ENCODE measurements at regions of chr18 and their contacts with region 1.

Region 1: DNA sequence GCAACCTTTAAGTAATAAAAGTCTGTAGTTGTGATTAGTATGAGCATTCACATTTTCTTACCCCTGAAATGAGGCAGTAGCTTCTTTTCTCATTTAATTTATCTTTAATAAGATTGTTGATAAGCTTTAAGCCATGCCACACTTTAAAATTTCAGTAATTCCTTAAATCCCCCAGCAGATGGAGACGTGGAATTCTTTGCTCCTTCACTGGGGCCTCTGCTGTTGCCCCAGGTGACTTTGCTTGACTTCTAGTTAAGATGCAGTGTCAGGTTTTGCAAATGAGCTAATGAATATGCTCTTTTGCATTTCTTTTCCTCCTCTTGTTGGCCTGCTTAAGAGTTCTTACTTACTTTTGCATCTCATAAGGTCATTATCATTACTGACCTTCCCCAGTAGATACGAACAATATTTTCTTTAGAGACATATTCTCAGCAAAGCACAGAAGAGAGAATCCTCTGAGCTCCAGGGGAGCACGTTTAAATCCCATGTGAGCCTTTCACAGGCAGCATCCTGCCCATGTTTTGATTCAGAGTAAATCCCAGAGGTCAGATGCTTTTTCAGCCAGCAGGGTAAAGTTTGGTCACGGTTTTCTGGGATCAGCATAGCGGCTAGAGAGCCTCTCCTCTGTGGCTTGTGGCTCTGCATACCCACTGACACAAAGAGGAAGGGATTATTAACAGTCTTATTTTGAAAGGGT is 222.9 kb downstream of the PTPRM start:
- DNase-seq: peak; percentile 59
- H3K4me3 ChIP-seq: no peak overlapping the region
- H3K27ac ChIP-seq: no peak overlapping the region
- H3K4me1 ChIP-seq: no peaks in the 10 kb centered on the region
- H3K27me3 ChIP-seq: no peaks in the 10 kb centered on the region
- CTCF ChIP-seq: peak; percentile 31 to 43
- POLR2A ChIP-seq: no peak

Region 2: DNA sequence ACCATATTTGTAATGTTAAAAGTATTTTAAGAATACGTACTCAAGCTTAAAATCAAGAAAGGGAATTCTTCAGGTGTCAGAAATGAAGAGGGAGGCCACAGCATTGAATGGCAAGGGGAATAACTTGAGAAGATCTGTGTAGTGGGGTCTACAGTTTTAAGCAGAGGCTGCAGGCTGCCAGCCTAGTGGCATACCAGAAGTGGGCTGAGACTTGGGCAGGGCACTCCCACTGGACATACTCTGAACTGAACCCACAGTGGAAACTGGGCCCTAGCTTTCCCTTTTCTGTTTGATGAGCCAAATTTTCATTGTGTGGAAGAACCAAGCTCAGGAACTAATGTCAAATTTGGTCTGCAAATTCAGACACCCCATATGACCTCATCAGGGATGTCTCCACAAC is 15.9 kb after region 1 on chr18:
- CTCF ChIA-PET with region 1: interaction called, 17 read pairs
- POLR2A ChIA-PET with region 1: no interaction called
- dilution Hi-C with region 1: no loop called
- intact Hi-C with region 1: no loop called
- DNase-seq: no peak
- H3K4me3 ChIP-seq: no peak overlapping the region
- H3K27ac ChIP-seq: no peak overlapping the region
- H3K4me1 ChIP-seq: no peaks in the 10 kb centered on the region
- H3K27me3 ChIP-seq: no peaks in the 10 kb centered on the region
- CTCF ChIP-seq: no peak
- POLR2A ChIP-seq: no peak

Region 3: GRCh38 chr18:7980136-7980535 is 190.1 kb after region 1 on chr18:
- CTCF ChIA-PET with region 1: interaction called, 15 read pairs
- POLR2A ChIA-PET with region 1: no interaction called
- dilution Hi-C with region 1: no loop called
- intact Hi-C with region 1: loop called (anchors 10 kb)
- DNase-seq: no peak
- H3K4me3 ChIP-seq: no peak overlapping the region
- H3K27ac ChIP-seq: no peak overlapping the region
- H3K4me1 ChIP-seq: no peaks in the 10 kb centered on the region
- H3K27me3 ChIP-seq: no peaks in the 10 kb centered on the region
- CTCF ChIP-seq: peak in 1 of 2 donors; percentile 3
- POLR2A ChIP-seq: no peak

Region 4: DNA sequence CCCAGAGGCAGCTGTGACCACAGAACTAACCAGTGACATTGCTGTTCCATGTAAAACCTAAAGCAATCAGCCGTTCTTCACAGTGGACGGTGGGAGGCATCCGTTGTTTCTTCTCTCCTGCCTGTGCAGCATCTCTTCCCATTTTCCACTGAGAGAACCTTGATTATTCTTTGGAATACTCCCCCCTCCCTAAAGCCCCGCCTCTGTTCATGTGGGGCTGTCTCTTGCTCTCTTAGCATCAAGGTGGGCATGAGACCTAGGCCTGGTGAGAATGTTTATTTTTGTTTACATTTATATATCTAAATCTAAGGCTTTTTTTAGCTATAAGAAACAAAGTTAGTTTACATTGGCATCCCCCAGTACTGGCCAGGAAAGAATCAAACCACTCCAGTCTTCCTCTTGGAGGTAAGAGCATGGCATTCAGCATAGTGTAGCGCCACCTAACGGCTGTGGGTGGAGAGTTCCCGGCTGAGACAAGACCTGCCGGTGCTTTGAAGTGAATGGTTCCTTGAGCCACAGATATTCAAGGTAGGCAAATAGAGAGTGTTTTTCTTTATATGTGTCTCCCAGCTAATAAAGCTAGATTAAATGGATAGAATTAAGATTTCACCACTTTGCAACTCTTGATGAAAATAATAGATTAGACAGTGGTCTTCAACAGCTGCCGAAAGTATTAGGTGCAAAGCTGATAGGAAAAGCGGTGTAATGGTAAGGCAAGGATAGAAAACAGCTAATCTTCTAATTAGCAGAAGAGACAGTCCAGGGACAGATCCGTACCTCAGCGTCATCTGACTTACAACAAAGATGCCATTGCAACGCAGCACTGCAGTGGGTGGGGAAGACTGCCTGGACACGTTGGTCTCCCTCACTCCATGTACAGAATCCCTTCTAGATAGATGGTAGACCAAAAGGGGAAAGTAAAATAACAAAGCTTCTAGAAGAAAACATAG is 599.7 kb after region 1 on chr18:
- CTCF ChIA-PET with region 1: interaction called, 62 read pairs
- POLR2A ChIA-PET with region 1: no interaction called
- dilution Hi-C with region 1: no loop called
- intact Hi-C with region 1: loop called (anchors 1 kb)
- DNase-seq: peak; percentile 78
- H3K4me3 ChIP-seq: no peak overlapping the region
- H3K27ac ChIP-seq: no peak overlapping the region
- H3K4me1 ChIP-seq: peaks cover 4% of the 10 kb centered on the region
- H3K27me3 ChIP-seq: no peaks in the 10 kb centered on the region
- CTCF ChIP-seq: peak; percentile 81 to 82
- POLR2A ChIP-seq: no peak

Region 5: DNA sequence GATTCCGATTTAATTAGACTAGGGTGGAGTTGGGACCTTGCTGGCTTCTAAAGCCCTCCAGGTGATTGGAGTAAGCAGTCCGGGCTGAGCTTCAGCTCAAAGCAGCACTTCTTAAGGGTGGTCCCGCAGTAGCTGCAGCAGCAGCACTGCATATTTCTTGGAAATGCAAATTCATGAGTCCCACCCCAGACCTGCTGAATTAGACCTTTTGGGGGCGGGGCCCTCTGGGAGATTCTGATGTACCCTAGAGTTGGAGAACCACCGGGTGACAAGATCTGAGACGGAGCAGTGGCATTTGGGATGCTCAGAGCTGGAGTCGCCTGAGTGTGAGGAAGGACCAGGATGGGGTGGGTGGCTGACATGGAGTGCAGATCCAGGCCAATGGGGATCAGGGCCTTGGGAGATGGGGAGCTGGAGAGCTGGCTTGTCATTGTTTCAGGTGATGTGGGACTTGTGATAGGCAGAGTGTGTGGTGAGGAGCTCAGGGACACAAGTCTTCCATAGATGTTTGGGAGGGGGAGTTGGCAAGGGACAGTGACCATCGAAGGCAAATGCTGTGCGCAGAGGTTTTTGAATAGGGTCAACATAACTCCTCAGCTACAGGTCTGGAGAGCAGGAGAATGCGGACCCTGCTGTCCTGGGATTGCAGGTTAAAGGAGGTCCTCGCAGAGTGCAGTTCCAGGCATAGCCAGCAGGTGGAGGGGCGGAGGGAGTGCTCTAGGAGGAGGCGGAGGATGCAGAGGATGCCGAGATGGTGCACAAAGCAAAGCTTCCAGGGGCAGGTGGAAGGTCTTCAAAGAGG is 688.4 kb after region 1 on chr18:
- CTCF ChIA-PET with region 1: interaction called, 47 read pairs
- POLR2A ChIA-PET with region 1: interaction called, 5 read pairs
- dilution Hi-C with region 1: no loop called
- intact Hi-C with region 1: no loop called
- DNase-seq: peak; percentile 55
- H3K4me3 ChIP-seq: no peak overlapping the region
- H3K27ac ChIP-seq: no peak overlapping the region
- H3K4me1 ChIP-seq: no peaks in the 10 kb centered on the region
- H3K27me3 ChIP-seq: peaks cover 0 to 3% of the 10 kb centered on the region in 2 experiments
- CTCF ChIP-seq: peak; percentile 67 to 92
- POLR2A ChIP-seq: no peak